Psoas muscle (tissue), 8 donors: ENCODE measurements at regions of chr22 and their contacts with region 1.

Region 1: GRCh38 chr22:49305214-49305909 is 522.3 kb downstream of the BRD1 start:
- DNase-seq: peak in 1 of 2 donors; percentile 41
- ATAC-seq: peak in 2 of 4 donors; percentile 57 to 79
- H3K4me3 ChIP-seq: no peak overlapping the region
- H3K27ac ChIP-seq: no peak overlapping the region
- H3K4me1 ChIP-seq: no peaks in the 10 kb centered on the region
- H3K27me3 ChIP-seq: peaks cover 0 to 12% (median 4%) of the 10 kb centered on the region in 3 donors
- CTCF ChIP-seq: peak; percentile 69

Region 2: GRCh38 chr22:48574776-48575565 is 730.4 kb before region 1 on chr22:
- intact Hi-C with region 1: loop called (anchors 5 to 10 kb)
- DNase-seq: peak; percentile 41 to 51
- ATAC-seq: peak; percentile 65 to 89 (median 82)
- H3K4me3 ChIP-seq: no peak overlapping the region
- H3K27ac ChIP-seq: no peak overlapping the region
- H3K4me1 ChIP-seq: no peaks in the 10 kb centered on the region
- H3K27me3 ChIP-seq: peaks cover 0 to 40% (median 5%) of the 10 kb centered on the region in 3 donors
- CTCF ChIP-seq: no peak

Region 3: GRCh38 chr22:48581796-48582469 is 723.4 kb before region 1 on chr22:
- intact Hi-C with region 1: loop called (anchors 5 to 10 kb)
- DNase-seq: peak in 1 of 2 donors; percentile 14
- ATAC-seq: no peak
- H3K4me3 ChIP-seq: no peak overlapping the region
- H3K27ac ChIP-seq: no peak overlapping the region
- H3K4me1 ChIP-seq: no peaks in the 10 kb centered on the region
- H3K27me3 ChIP-seq: peaks cover 0 to 37% (median 4%) of the 10 kb centered on the region in 3 donors
- CTCF ChIP-seq: no peak

Region 4: DNA sequence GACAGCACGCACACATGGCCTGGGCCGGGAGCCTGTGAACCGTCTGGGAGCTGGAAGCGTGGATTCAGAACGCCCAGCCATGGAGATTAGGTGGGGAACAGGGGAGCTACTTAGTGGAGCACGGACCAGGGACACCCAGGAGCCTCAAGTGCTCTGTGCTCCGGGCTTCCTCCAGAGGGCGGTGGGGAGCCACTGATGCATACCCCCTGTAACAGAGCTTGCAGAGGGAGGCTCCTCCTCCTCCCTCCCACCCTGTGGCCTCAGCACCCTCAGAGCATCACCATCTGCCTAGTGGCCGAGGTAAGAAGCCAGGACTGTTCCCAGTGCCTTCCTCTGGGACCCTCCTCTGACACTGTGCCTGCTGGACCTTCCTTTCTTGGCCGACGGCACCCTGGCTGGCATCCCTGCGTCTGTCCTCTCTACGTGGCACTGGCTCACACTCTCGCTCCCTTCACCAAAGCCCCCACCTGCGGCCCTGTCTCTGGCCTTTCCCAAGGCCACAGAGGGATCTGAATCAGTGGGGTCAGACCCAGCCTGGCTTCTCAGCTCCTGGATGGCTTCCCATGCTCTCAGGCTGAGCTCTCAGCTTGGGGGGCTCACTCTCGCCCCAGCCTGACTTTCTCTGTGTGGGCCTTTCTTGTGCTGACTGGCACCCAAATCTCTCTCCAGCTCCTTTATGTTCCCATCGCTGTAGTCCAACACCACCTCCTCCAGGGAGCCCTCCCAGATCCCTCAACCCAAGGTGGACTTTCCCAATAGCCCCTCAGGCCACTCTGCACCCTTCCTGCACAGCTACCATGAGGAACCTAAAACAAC is 258.6 kb before region 1 on chr22:
- intact Hi-C with region 1: loop called in 1 of 2 experiments (anchors 5 kb)
- DNase-seq: no peak
- ATAC-seq: peak in 1 of 4 donors; percentile 22
- H3K4me3 ChIP-seq: no peak overlapping the region
- H3K27ac ChIP-seq: no peak overlapping the region
- H3K4me1 ChIP-seq: no peaks in the 10 kb centered on the region
- H3K27me3 ChIP-seq: peaks cover 0 to 8% (median 3%) of the 10 kb centered on the region in 3 donors
- CTCF ChIP-seq: no peak